SK-N-SH (cell line): ENCODE measurements at regions of chr2 and their contacts with region 1.

Region 1: DNA sequence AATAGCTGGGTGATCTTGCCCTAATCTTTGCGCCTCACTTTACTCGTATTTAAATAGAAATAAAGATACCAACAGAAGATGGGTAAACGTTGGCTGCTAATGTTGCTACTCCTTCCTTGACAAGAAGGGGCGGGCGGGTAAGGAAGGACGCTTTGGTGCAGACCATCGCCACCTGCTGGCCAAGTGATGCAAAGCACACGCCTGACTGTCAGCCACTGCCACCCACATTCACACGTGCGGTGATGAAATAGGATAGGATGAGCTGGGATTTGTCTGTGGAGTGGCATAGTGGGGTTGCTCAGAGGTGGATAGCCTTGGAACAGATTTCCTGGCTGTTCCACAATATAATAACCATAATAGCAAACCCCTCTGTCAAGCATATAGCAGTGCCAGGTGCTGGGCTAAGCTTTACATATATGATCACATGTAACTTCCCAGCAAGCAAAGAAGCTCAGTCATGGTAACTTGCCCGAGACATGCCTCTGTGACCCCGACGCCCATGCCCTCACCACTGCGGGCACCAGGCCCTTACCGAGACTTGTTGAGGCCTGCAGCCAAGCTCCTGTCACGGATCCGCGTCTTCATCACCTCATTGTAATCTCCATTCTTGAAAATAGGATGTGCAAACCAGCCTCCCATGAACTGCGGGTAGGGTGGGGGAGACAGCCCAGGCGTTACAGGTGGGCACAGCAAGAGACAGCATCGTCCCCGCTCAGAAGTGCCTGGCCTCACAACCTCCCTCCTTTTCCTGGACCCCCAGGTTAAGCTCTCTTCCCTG is 39.3 kb downstream of the LCT start:
- DNase-seq: peak; percentile 84
- H3K4me3 ChIP-seq: peak overlapping the region in 1 of 2 experiments; percentile 27; a peak in 1 of 4 replicates
- H3K27ac ChIP-seq: no peak overlapping the region
- H3K4me1 ChIP-seq: no peaks in the 10 kb centered on the region; a peak in 1 of 4 replicates
- H3K27me3 ChIP-seq: no peaks in the 10 kb centered on the region
- CTCF ChIP-seq: peak; percentile 94
- EP300 ChIP-seq: no peak
- RAD21 ChIP-seq: peak; percentile 65

Region 2: GRCh38 chr2:135004005-135004746 is 793.5 kb before region 1 on chr2:
- CTCF ChIA-PET with region 1: interaction called, 75 read pairs
- POLR2A ChIA-PET with region 1: no interaction called
- DNase-seq: peak; percentile 80
- H3K4me3 ChIP-seq: no peak overlapping the region; a peak in 1 of 4 replicates
- H3K27ac ChIP-seq: no peak overlapping the region
- H3K4me1 ChIP-seq: peaks cover 0 to 3% of the 10 kb centered on the region in 2 experiments; a peak in 1 of 4 replicates
- H3K27me3 ChIP-seq: no peaks in the 10 kb centered on the region
- CTCF ChIP-seq: peak; percentile 97
- EP300 ChIP-seq: no peak
- RAD21 ChIP-seq: peak; percentile 99

Region 3: DNA sequence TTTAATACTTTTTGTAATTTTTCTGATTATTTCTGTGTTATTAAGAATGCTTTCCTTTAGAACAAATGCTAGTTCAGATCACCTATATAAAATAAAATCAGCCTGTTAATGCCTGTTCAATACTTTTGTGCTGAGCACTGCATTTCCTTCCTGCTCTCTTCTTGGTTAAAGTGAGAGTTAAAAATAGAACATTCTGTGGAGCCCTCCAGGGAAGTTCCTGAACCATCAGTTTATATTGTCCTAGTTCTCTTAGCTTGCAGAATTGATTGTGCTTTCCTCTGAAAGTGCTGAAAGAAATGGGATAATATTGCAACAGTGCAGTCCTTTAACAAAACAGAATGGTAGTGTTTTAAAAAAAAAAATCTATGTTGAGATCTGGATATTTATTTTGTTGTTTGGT is 130.6 kb before region 1 on chr2:
- CTCF ChIA-PET with region 1: no interaction called
- POLR2A ChIA-PET with region 1: no interaction called
- DNase-seq: no peak
- H3K4me3 ChIP-seq: no peak overlapping the region
- H3K27ac ChIP-seq: no peak overlapping the region
- H3K4me1 ChIP-seq: peaks cover 6 to 15% of the 10 kb centered on the region in 2 experiments; a peak in 3 of 4 replicates
- H3K27me3 ChIP-seq: no peaks in the 10 kb centered on the region
- CTCF ChIP-seq: no peak
- EP300 ChIP-seq: no peak
- RAD21 ChIP-seq: no peak

Region 4: GRCh38 chr2:135768863-135769262 is 28.8 kb before region 1 on chr2:
- CTCF ChIA-PET with region 1: interaction called, 15 read pairs
- POLR2A ChIA-PET with region 1: no interaction called
- DNase-seq: no peak
- H3K4me3 ChIP-seq: no peak overlapping the region
- H3K27ac ChIP-seq: no peak overlapping the region
- H3K4me1 ChIP-seq: no peaks in the 10 kb centered on the region
- H3K27me3 ChIP-seq: no peaks in the 10 kb centered on the region
- CTCF ChIP-seq: no peak
- EP300 ChIP-seq: no peak
- RAD21 ChIP-seq: no peak

Region 5: GRCh38 chr2:135812907-135813502 is 15.3 kb after region 1 on chr2:
- CTCF ChIA-PET with region 1: interaction called, 46 read pairs
- POLR2A ChIA-PET with region 1: no interaction called
- DNase-seq: no peak
- H3K4me3 ChIP-seq: no peak overlapping the region
- H3K27ac ChIP-seq: no peak overlapping the region
- H3K4me1 ChIP-seq: no peaks in the 10 kb centered on the region
- H3K27me3 ChIP-seq: no peaks in the 10 kb centered on the region; the same call in 1 of the 2 replicates
- CTCF ChIP-seq: no peak
- EP300 ChIP-seq: no peak
- RAD21 ChIP-seq: no peak

Region 6: DNA sequence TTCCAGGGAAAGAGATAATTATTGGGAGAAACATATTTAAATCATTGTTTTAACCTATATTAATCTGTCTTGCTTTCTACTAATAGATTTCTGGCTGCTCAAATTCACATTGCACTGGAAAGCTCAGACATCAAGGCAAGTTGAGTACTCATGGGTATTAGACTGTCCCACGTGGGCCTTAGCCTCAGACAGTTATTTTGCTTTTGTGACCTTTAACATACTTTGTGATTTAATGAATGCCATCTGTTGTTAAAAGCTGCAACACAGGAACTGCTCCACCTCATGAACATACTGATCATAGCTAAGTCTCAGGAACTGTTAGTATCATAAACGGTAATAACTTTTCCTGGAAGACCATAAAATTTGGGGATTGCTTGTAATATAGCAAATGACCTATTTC is 42.0 kb after region 1 on chr2:
- CTCF ChIA-PET with region 1: interaction called, 11 read pairs
- POLR2A ChIA-PET with region 1: no interaction called
- DNase-seq: peak; percentile 38
- H3K4me3 ChIP-seq: no peak overlapping the region
- H3K27ac ChIP-seq: peak overlapping the region; percentile 59 to 91
- H3K4me1 ChIP-seq: peaks cover 11 to 16% of the 10 kb centered on the region in 2 experiments; a peak in 3 of 4 replicates
- H3K27me3 ChIP-seq: no peaks in the 10 kb centered on the region
- CTCF ChIP-seq: no peak
- EP300 ChIP-seq: peak in 1 of 2 experiments; percentile 10; a peak in 1 of 4 replicates
- RAD21 ChIP-seq: no peak